CD8-positive, alpha-beta T cell (primary cell): ENCODE measurements at regions of chr22 and their contacts with region 1.

Region 1: DNA sequence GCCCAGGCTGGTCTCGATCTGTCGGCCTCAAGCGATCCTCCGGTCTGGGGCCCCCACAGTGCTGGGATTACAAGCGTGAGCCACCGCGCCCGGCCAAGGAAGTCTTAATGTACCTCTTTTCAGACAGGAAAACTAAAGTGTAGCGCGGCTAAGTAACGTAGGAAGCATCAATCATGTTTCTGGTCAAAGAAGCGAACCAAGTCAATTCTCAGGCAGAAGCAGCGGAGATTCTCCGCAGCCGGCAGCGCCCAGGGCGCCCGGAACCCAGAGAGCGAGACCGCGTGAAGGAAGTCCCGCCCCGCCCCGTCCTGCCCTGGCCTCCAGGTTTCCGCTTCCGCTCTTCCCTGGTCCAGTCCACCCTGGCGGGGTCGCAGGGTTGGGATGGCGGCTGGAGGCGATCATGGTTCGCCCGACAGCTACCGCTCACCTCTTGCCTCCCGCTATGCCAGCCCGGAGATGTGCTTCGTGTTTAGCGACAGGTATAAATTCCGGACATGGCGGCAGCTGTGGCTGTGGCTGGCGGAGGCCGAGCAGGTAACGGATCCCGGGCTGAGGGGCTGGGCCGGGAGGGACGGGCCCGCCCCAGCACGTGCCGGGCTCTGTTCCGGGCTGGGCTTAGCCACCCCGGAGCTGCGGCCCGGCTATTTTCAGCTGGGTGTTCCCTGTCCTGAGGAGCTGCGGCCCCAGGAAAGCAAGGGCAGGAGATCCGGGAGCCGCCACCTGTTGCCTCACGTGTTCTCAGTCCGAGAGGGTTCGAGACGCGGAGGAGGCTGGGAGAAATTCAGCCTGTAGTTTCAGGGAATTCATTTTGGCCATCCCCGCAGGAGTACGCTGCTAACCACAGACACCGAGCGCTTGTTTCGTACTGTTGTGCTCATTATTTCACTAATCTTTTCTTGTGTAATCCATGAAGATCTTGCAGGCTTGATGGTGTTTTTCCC is at the start of gene ADSL:
- DNase-seq: peak; percentile 60 to 91 (median 83)
- ATAC-seq: peak; percentile 76
- H3K4me3 ChIP-seq: peak within 1 kb of the TSS; percentile 73 to 90
- H3K4me3 Mint-ChIP-seq: peak within 1 kb of the TSS; percentile 97
- H3K27ac ChIP-seq: peak within 1 kb of the TSS; percentile 74 to 82
- H3K27ac Mint-ChIP-seq: peak within 1 kb of the TSS; percentile 99
- H3K4me1 ChIP-seq: peaks cover 45% of the 10 kb centered on the region
- H3K4me1 Mint-ChIP-seq: peaks cover 60% of the 10 kb centered on the region
- H3K27me3 ChIP-seq: no peaks in the 10 kb centered on the region
- H3K27me3 Mint-ChIP-seq: no peaks in the 10 kb centered on the region
- CTCF ChIP-seq: no peak
- total RNA-seq, gene ADSL: 61.8 to 68.7 TPM

Region 2: GRCh38 chr22:39960791-39961746 is 385.4 kb before region 1 on chr22:
- CTCF ChIA-PET with region 1: interaction called, 4 read pairs
- POLR2A ChIA-PET with region 1: no interaction called
- intact Hi-C with region 1: loop called in 1 of 2 experiments (anchors 10 kb)
- DNase-seq: peak; percentile 15 to 90 (median 69)
- ATAC-seq: peak; percentile 82
- H3K4me3 ChIP-seq: no peak overlapping the region
- H3K4me3 Mint-ChIP-seq: peak overlapping the region; percentile 19
- H3K27ac ChIP-seq: peak overlapping the region; percentile 15 to 80
- H3K27ac Mint-ChIP-seq: peak overlapping the region; percentile 92
- H3K4me1 ChIP-seq: peaks cover 60% of the 10 kb centered on the region
- H3K4me1 Mint-ChIP-seq: peaks cover 69% of the 10 kb centered on the region
- H3K27me3 ChIP-seq: no peaks in the 10 kb centered on the region
- H3K27me3 Mint-ChIP-seq: no peaks in the 10 kb centered on the region
- CTCF ChIP-seq: no peak

Region 3: GRCh38 chr22:40050258-40050657 is 296.2 kb before region 1 on chr22:
- CTCF ChIA-PET with region 1: interaction called, 11 read pairs
- POLR2A ChIA-PET with region 1: interaction called, 62 read pairs
- intact Hi-C with region 1: no loop called
- DNase-seq: peak in 1 of 9 experiments; percentile 34
- ATAC-seq: no peak
- H3K4me3 ChIP-seq: no peak overlapping the region
- H3K4me3 Mint-ChIP-seq: peak overlapping the region; percentile 49
- H3K27ac ChIP-seq: no peak overlapping the region
- H3K27ac Mint-ChIP-seq: peak overlapping the region; percentile 77
- H3K4me1 ChIP-seq: peaks cover 70% of the 10 kb centered on the region
- H3K4me1 Mint-ChIP-seq: peaks cover 72% of the 10 kb centered on the region
- H3K27me3 ChIP-seq: no peaks in the 10 kb centered on the region
- H3K27me3 Mint-ChIP-seq: no peaks in the 10 kb centered on the region
- CTCF ChIP-seq: no peak

Region 4: GRCh38 chr22:40215266-40215665 is 131.2 kb before region 1 on chr22:
- CTCF ChIA-PET with region 1: interaction called, 13 read pairs
- POLR2A ChIA-PET with region 1: interaction called, 3 read pairs
- intact Hi-C with region 1: no loop called
- DNase-seq: peak in 2 of 9 experiments; percentile 38 to 47
- ATAC-seq: no peak
- H3K4me3 ChIP-seq: no peak overlapping the region
- H3K4me3 Mint-ChIP-seq: peak overlapping the region; percentile 35
- H3K27ac ChIP-seq: peak overlapping the region in 1 of 2 experiments; percentile 64
- H3K27ac Mint-ChIP-seq: peak overlapping the region; percentile 94
- H3K4me1 ChIP-seq: peaks cover 87% of the 10 kb centered on the region
- H3K4me1 Mint-ChIP-seq: peaks cover 93% of the 10 kb centered on the region
- H3K27me3 ChIP-seq: no peaks in the 10 kb centered on the region
- H3K27me3 Mint-ChIP-seq: no peaks in the 10 kb centered on the region
- CTCF ChIP-seq: no peak

Region 5: DNA sequence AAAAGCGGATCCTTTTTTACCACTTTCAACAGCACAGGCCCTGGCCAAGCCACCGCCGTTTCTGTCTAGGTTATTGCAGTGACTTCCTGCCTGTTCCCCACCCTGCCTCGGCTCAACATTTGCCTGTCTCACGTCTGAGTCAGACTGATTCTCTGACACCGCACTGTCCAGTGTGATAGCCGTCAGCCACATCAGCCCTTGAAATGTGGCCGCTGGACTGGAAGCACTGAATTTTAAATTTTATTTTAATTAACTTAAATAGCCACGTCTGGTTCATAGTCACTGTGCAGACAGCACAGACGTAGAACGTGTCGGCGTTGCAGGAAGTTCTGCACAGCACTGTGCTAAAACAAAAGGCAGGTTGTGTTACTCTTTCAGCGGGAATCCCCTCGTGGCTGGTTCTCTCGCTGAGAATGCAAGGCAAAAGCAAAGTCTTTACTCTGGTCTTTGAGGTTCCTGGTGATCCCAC is 56.4 kb before region 1 on chr22:
- CTCF ChIA-PET with region 1: interaction called, 26 read pairs
- POLR2A ChIA-PET with region 1: interaction called, 6 read pairs
- intact Hi-C with region 1: loop called (anchors 1 kb)
- DNase-seq: peak; percentile 52 to 91 (median 76)
- ATAC-seq: peak; percentile 86
- H3K4me3 ChIP-seq: peak overlapping the region in 1 of 2 experiments; percentile 6
- H3K4me3 Mint-ChIP-seq: peak overlapping the region; percentile 59
- H3K27ac ChIP-seq: peak overlapping the region; percentile 58 to 85
- H3K27ac Mint-ChIP-seq: peak overlapping the region; percentile 98
- H3K4me1 ChIP-seq: peaks cover 31% of the 10 kb centered on the region
- H3K4me1 Mint-ChIP-seq: peaks cover 59% of the 10 kb centered on the region
- H3K27me3 ChIP-seq: no peaks in the 10 kb centered on the region
- H3K27me3 Mint-ChIP-seq: no peaks in the 10 kb centered on the region
- CTCF ChIP-seq: no peak

Region 6: DNA sequence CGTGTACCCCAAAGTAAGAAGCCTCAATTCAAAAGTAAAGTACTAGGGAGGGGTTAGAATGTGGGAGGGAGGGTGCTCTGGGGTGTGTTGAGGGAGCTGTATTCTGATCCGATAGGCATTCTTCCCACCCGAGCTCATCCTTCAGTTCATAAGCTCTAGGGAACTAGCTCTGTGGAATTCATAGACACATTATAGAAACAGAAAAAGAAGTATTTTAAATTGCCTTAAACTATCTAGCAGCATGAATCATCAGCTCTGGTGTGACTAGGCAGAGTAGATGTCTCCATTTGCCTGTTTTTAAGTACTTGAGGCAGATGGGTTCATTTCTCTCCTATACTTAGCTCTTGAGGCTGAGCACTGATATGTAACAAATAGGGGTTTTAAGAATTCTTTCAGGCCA is 16.6 kb after region 1 on chr22:
- CTCF ChIA-PET with region 1: interaction called, 22 read pairs
- POLR2A ChIA-PET with region 1: no interaction called
- intact Hi-C with region 1: no loop called
- DNase-seq: no peak
- ATAC-seq: no peak
- H3K4me3 ChIP-seq: no peak overlapping the region
- H3K4me3 Mint-ChIP-seq: no peak overlapping the region
- H3K27ac ChIP-seq: no peak overlapping the region
- H3K27ac Mint-ChIP-seq: no peak overlapping the region
- H3K4me1 ChIP-seq: no peaks in the 10 kb centered on the region
- H3K4me1 Mint-ChIP-seq: no peaks in the 10 kb centered on the region
- H3K27me3 ChIP-seq: no peaks in the 10 kb centered on the region
- H3K27me3 Mint-ChIP-seq: no peaks in the 10 kb centered on the region
- CTCF ChIP-seq: no peak

Region 7: GRCh38 chr22:40426594-40427333 is 80.3 kb after region 1 on chr22:
- CTCF ChIA-PET with region 1: no interaction called
- POLR2A ChIA-PET with region 1: no interaction called
- intact Hi-C with region 1: no loop called
- DNase-seq: no peak
- ATAC-seq: no peak
- H3K4me3 ChIP-seq: no peak overlapping the region
- H3K4me3 Mint-ChIP-seq: no peak overlapping the region
- H3K27ac ChIP-seq: no peak overlapping the region
- H3K27ac Mint-ChIP-seq: peak overlapping the region; percentile 73
- H3K4me1 ChIP-seq: no peaks in the 10 kb centered on the region
- H3K4me1 Mint-ChIP-seq: peaks cover 27% of the 10 kb centered on the region
- H3K27me3 ChIP-seq: no peaks in the 10 kb centered on the region
- H3K27me3 Mint-ChIP-seq: no peaks in the 10 kb centered on the region
- CTCF ChIP-seq: no peak